GM10248 (cell line): ENCODE measurements at regions of chr10 and their contacts with region 1.

Region 1: DNA sequence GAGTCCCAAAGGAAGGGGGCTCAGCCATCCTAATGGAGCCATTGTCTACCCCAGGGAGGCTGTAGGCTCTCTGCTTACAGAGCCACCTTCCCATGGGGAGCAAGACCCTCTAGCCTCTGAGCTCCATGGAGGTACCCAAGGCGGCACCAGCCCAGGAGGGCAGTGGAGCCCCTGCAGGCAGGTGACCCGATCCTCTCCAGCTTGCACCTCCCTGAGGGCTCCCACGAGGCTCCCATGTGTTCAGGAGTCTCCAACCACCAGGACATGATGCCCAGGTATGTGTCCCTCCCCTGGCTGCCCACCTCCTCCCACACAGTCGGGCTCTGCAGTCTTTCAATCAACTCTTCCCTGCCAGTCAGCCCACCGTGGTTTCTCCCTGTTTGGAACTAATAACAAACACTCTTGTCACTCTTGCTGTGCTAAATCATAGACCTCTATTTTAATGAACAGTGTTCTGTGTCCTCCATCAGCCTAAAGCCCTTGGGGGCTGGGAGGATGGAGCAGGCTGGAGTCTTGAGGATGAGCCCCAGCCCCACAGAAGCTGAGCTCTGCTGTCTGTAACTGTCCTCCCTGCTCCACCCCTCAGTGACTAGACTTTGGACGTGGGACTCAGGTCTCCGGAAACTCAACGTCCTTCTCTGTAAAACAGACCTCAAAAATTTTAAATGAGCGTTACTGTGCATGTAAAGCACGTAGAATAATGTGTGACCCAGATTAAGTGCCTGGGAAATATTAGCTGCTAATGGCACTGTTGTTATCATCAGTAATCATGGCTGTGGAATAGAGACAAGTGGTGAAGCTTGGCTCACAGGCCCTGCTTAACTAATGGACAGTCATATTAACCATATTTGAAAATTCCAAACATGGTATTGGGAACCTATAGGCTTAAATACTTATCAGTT is 298.9 kb downstream of the WDR37 start:
- DNase-seq: no peak
- CTCF ChIP-seq: no peak

Region 2: GRCh38 chr10:1368842-1369171 is 13.7 kb after region 1 on chr10:
- CTCF ChIA-PET with region 1: interaction called, 11 read pairs
- POLR2A ChIA-PET with region 1: no interaction called
- DNase-seq: peak; percentile 66
- CTCF ChIP-seq: peak; percentile 30

Region 3: GRCh38 chr10:1526144-1527050 is 171.3 kb after region 1 on chr10:
- CTCF ChIA-PET with region 1: no interaction called
- POLR2A ChIA-PET with region 1: no interaction called
- DNase-seq: no peak
- CTCF ChIP-seq: no peak